Psoas muscle (tissue), 8 donors: ENCODE measurements at regions of chr9 and their contacts with region 1.

Region 1: GRCh38 chr9:34546834-34547827 is 24.3 kb upstream of the ENHO start:
- DNase-seq: peak; percentile 63 to 80
- ATAC-seq: peak; percentile 54 to 66 (median 58)
- H3K4me3 ChIP-seq: no peak overlapping the region
- H3K27ac ChIP-seq: no peak overlapping the region
- H3K4me1 ChIP-seq: no peaks in the 10 kb centered on the region
- H3K27me3 ChIP-seq: peaks cover 0 to 4% (median 0%) of the 10 kb centered on the region in 3 donors
- CTCF ChIP-seq: peak; percentile 59

Region 2: GRCh38 chr9:34591248-34591916 is 44.3 kb after region 1 on chr9:
- intact Hi-C with region 1: loop called (anchors 1 to 2 kb)
- DNase-seq: peak; percentile 91 to 94
- ATAC-seq: peak; percentile 76 to 82 (median 81)
- H3K4me3 ChIP-seq: peak overlapping the region; percentile 80
- H3K27ac ChIP-seq: peak overlapping the region; percentile 76
- H3K4me1 ChIP-seq: peaks cover 57% of the 10 kb centered on the region
- H3K27me3 ChIP-seq: no peaks in the 10 kb centered on the region
- CTCF ChIP-seq: peak; percentile 93

Region 3: GRCh38 chr9:34620061-34620994 is 73.2 kb after region 1 on chr9 and contains the start of gene DCTN3:
- intact Hi-C with region 1: no loop called
- DNase-seq: peak; percentile 91 to 95
- ATAC-seq: peak; percentile 97 to 100 (median 100)
- H3K4me3 ChIP-seq: peak within 1 kb of the TSS; percentile 89
- H3K27ac ChIP-seq: peak within 1 kb of the TSS; percentile 56
- H3K4me1 ChIP-seq: peaks cover 18% of the 10 kb centered on the region
- H3K27me3 ChIP-seq: peaks cover 0 to 36% (median 16%) of the 10 kb centered on the region in 3 donors
- CTCF ChIP-seq: no peak
- total RNA-seq, gene DCTN3: 79.4 to 109 (median 93.8) TPM

Region 4: GRCh38 chr9:34796924-34797323 is 249.8 kb after region 1 on chr9:
- intact Hi-C with region 1: no loop called
- DNase-seq: no peak
- ATAC-seq: no peak
- H3K4me3 ChIP-seq: no peak overlapping the region
- H3K27ac ChIP-seq: no peak overlapping the region
- H3K4me1 ChIP-seq: no peaks in the 10 kb centered on the region
- H3K27me3 ChIP-seq: peaks cover 0 to 10% (median 0%) of the 10 kb centered on the region in 3 donors
- CTCF ChIP-seq: no peak